Cardiac septum (tissue), 1 donor: ENCODE measurements at regions of chr2 and their contacts with region 1.

Region 1: GRCh38 chr2:73828818-73829570 is at the start of gene STAMBP:
- DNase-seq: peak; percentile 98
- total RNA-seq, gene STAMBP: 37.4 TPM

Region 2: GRCh38 chr2:73851274-73851673 is 22.3 kb after region 1 on chr2:
- intact Hi-C with region 1: no loop called
- DNase-seq: no peak

Region 3: GRCh38 chr2:74147727-74148456 is 318.9 kb after region 1 on chr2 and contains the start of gene BOLA3:
- intact Hi-C with region 1: loop called (anchors 10 kb)
- DNase-seq: peak; percentile 95
- total RNA-seq, gene BOLA3: 69.5 TPM

Region 4: DNA sequence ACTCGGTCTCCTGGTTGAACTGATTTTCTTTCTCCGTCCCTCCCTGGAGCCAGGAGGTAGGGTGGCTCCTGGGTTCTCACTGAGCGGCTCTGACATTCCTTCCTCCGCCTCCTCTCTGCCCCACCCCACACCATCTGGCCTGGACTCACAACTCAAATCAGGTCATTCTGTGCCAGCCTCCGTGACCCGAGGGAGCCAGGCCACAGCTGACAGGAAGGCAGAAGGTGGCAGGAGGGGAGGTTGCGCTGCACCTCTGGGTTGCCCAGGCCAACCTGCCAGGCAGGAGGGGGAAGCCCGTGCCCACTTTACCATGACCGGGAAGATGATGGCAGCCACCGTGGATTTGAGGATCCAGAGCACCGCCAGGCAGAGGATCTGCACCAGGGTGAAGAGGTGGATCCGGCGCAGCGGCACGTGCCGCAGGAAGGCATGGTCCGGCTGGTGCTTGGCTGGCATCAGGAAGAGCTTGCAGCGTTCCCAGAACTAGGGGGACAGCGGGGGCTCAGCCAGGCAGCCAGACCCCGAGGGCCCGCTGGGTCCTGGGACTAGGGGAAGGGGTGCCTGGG is 397.7 kb after region 1 on chr2:
- intact Hi-C with region 1: no loop called
- DNase-seq: peak; percentile 79

Region 5: DNA sequence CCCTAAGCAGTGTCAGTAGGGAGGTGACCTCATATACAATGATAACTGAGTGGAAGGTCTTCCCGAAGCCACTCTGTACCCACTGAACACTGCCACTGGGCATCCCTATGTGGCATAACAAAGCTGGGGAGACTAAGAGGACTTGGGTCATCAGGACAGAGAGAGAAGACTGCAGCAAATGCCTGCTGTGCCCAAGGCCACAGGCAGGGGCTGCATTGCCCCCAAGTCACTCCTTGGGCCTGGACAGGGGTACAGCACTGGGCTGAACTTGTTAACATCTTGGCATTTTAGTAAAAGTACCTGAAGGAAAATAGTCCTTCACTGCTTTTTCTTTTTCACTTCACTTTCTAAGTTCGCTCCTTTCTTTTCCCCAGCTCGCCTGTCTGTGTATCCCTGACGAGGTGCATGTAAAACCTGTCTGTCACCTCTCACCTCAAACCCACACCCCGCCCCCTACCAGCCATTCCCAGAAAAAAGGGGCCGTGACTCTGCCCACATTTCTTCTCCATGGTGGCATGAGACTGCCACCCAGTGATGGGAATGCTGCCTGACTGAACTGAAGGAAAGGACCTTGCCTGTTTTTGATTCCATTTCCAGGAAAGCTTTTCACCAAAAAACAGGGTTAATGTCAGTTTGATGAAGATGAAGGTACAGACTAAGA is 432.3 kb after region 1 on chr2:
- intact Hi-C with region 1: loop called (anchors 10 kb)
- DNase-seq: no peak

Region 6: GRCh38 chr2:74334931-74335333 is 505.9 kb after region 1 on chr2:
- intact Hi-C with region 1: loop called (anchors 10 kb)
- DNase-seq: peak; percentile 81

Region 7: GRCh38 chr2:74391580-74392448 is 562.8 kb after region 1 on chr2:
- intact Hi-C with region 1: loop called (anchors 10 kb)
- DNase-seq: peak; percentile 97